Aorta (tissue), 5 donors: ENCODE measurements at regions of chr16 and their contacts with region 1.

Region 1: GRCh38 chr16:87127061-87127739 is 190.0 kb downstream of the C16orf95 start:
- DNase-seq: peak; percentile 76 to 87
- ATAC-seq: peak; percentile 56
- H3K4me3 ChIP-seq: no peak overlapping the region
- H3K27ac ChIP-seq: peak overlapping the region; percentile 41 to 100
- H3K4me1 ChIP-seq: no peaks in the 10 kb centered on the region
- H3K27me3 ChIP-seq: no peaks in the 10 kb centered on the region

Region 2: GRCh38 chr16:86554917-86555703 is 572.1 kb before region 1 on chr16 and contains the start of gene MTHFSD:
- intact Hi-C with region 1: loop called in 1 of 2 experiments (anchors 5 kb)
- DNase-seq: peak; percentile 96 to 99
- ATAC-seq: peak; percentile 95
- H3K4me3 ChIP-seq: peak within 1 kb of the TSS; percentile 93 to 96
- H3K27ac ChIP-seq: peak within 1 kb of the TSS; percentile 30 to 85
- H3K4me1 ChIP-seq: no peaks in the 10 kb centered on the region
- H3K27me3 ChIP-seq: no peaks in the 10 kb centered on the region
- total RNA-seq, gene MTHFSD: 14.0 to 23.1 TPM

Region 3: GRCh38 chr16:87067836-87068761 is 59.1 kb before region 1 on chr16:
- intact Hi-C with region 1: loop called in 1 of 2 experiments (anchors 5 kb)
- DNase-seq: no peak
- ATAC-seq: peak; percentile 57
- H3K4me3 ChIP-seq: no peak overlapping the region
- H3K27ac ChIP-seq: peak overlapping the region; percentile 18 to 22
- H3K4me1 ChIP-seq: no peaks in the 10 kb centered on the region
- H3K27me3 ChIP-seq: no peaks in the 10 kb centered on the region

Region 4: GRCh38 chr16:87080571-87081167 is 46.5 kb before region 1 on chr16:
- intact Hi-C with region 1: no loop called
- DNase-seq: no peak
- ATAC-seq: no peak
- H3K4me3 ChIP-seq: no peak overlapping the region
- H3K27ac ChIP-seq: no peak overlapping the region
- H3K4me1 ChIP-seq: no peaks in the 10 kb centered on the region
- H3K27me3 ChIP-seq: peaks cover 0 to 1% of the 10 kb centered on the region in 2 donors

Region 5: DNA sequence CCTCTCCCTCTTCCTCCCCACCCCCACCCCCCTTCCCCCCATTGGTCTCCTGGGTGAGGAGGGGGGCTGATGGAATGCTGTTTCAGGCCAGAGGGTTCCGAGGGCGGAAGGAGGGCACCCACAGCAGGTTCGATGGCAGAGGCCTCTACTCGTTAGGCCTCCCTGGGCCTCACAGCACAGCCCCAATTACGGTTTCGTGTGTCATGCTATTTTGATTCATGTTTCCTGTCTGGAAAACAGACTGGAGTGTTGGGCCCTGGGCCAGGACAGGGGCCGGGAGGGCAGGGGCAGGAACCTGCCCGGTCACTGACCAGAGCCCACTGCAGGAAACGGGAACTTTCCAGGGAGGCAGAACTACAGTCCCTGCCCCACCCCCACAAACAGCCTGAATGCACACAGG is 51.8 kb after region 1 on chr16:
- intact Hi-C with region 1: loop called in 1 of 2 experiments (anchors 5 kb)
- DNase-seq: peak; percentile 88 to 89
- ATAC-seq: peak; percentile 62
- H3K4me3 ChIP-seq: no peak overlapping the region
- H3K27ac ChIP-seq: no peak overlapping the region
- H3K4me1 ChIP-seq: no peaks in the 10 kb centered on the region
- H3K27me3 ChIP-seq: no peaks in the 10 kb centered on the region